CD8-positive, alpha-beta memory T cell (primary cell): ENCODE measurements at regions of chr1 and their contacts with region 1.

Region 1: GRCh38 chr1:211843018-211843417 is 12.5 kb upstream of the LPGAT1 start:
- DNase-seq: no peak
- H3K4me3 ChIP-seq: no peak overlapping the region
- H3K4me3 Mint-ChIP-seq: peak overlapping the region; percentile 5 to 79 (median 62)
- H3K27ac ChIP-seq: no peak overlapping the region
- H3K27ac Mint-ChIP-seq: peak overlapping the region; percentile 32 to 90 (median 83)
- H3K4me1 ChIP-seq: peaks cover 11% of the 10 kb centered on the region
- H3K4me1 Mint-ChIP-seq: peaks cover 22 to 25% (median 23%) of the 10 kb centered on the region in 3 donors
- H3K27me3 ChIP-seq: no peaks in the 10 kb centered on the region
- H3K27me3 Mint-ChIP-seq: peaks cover 0 to 9% of the 10 kb centered on the region in 2 donors

Region 2: GRCh38 chr1:211675230-211676105 is 167.6 kb before region 1 on chr1 and contains the start of gene NEK2:
- CTCF ChIA-PET with region 1: no interaction called
- POLR2A ChIA-PET with region 1: interaction called, 19 read pairs
- DNase-seq: peak; percentile 70 to 89 (median 80)
- H3K4me3 ChIP-seq: peak within 1 kb of the TSS; percentile 74
- H3K4me3 Mint-ChIP-seq: peak within 1 kb of the TSS; percentile 86 to 98 (median 92)
- H3K27ac ChIP-seq: peak within 1 kb of the TSS; percentile 65
- H3K27ac Mint-ChIP-seq: peak within 1 kb of the TSS; percentile 61 to 88 (median 81)
- H3K4me1 ChIP-seq: peaks cover 4% of the 10 kb centered on the region
- H3K4me1 Mint-ChIP-seq: peaks cover 16 to 23% (median 19%) of the 10 kb centered on the region in 3 donors
- H3K27me3 ChIP-seq: no peaks in the 10 kb centered on the region
- H3K27me3 Mint-ChIP-seq: no peaks in the 10 kb centered on the region
- total RNA-seq, gene NEK2: 14.1 to 14.8 TPM

Region 3: GRCh38 chr1:212021563-212021962 is 178.5 kb after region 1 on chr1:
- CTCF ChIA-PET with region 1: no interaction called
- POLR2A ChIA-PET with region 1: no interaction called
- DNase-seq: no peak
- H3K4me3 ChIP-seq: no peak overlapping the region
- H3K4me3 Mint-ChIP-seq: no peak overlapping the region
- H3K27ac ChIP-seq: no peak overlapping the region
- H3K27ac Mint-ChIP-seq: no peak overlapping the region
- H3K4me1 ChIP-seq: no peaks in the 10 kb centered on the region
- H3K4me1 Mint-ChIP-seq: peaks cover 5 to 8% (median 8%) of the 10 kb centered on the region in 3 donors
- H3K27me3 ChIP-seq: no peaks in the 10 kb centered on the region
- H3K27me3 Mint-ChIP-seq: no peaks in the 10 kb centered on the region